ENCODE measurements at regions of chr9 and their contacts with region 1.

Region 1: DNA sequence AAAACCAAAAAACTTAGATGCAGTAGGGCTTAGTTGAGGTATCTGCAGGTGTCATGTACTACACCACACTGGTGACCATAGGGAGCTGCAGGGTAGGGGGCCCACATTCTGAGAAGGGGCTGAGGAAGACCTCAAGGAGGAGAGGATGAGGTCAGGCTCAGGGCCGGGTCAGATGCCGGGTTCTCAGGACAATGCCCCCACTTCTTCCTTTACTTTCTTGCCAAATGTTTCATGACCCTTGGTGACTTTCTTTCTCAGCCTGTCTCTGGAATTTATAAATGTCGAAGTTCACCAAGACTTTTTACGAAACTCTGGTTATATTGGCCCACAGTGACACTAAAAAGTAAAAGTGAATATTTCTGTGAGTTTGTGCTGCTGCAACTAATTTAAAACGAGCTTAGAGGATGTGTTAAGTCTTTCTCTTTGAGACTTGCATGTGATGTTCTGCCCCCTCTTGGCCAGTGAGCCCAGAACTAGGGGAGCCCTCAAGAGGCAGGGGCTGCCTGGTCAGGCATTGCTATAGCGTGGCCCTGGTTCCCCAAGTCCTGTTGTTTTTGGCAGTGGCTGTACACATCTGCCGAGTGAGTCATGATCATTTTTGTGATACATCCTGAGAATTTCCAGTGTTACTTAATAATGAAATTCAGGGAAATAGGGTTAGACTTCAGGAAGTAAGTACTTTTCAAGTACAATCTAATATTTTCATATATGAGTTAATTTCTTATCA is 11.2 kb downstream of the ACO1 start:
- DNase-seq: no peak

Region 2: GRCh38 chr9:32300373-32300772 is 95.3 kb before region 1 on chr9:
- intact Hi-C with region 1: no loop called
- DNase-seq: no peak

Region 3: GRCh38 chr9:32413424-32413823 is 17.8 kb after region 1 on chr9:
- intact Hi-C with region 1: no loop called
- DNase-seq: no peak

Region 4: GRCh38 chr9:32442433-32442832 is 46.8 kb after region 1 on chr9:
- intact Hi-C with region 1: loop called (anchors 10 kb)
- DNase-seq: no peak

Measured in cardiac septum (tissue), 1 donor.